Psoas muscle (tissue), 8 donors: ENCODE measurements at regions of chr3 and their contacts with region 1.

Region 1: DNA sequence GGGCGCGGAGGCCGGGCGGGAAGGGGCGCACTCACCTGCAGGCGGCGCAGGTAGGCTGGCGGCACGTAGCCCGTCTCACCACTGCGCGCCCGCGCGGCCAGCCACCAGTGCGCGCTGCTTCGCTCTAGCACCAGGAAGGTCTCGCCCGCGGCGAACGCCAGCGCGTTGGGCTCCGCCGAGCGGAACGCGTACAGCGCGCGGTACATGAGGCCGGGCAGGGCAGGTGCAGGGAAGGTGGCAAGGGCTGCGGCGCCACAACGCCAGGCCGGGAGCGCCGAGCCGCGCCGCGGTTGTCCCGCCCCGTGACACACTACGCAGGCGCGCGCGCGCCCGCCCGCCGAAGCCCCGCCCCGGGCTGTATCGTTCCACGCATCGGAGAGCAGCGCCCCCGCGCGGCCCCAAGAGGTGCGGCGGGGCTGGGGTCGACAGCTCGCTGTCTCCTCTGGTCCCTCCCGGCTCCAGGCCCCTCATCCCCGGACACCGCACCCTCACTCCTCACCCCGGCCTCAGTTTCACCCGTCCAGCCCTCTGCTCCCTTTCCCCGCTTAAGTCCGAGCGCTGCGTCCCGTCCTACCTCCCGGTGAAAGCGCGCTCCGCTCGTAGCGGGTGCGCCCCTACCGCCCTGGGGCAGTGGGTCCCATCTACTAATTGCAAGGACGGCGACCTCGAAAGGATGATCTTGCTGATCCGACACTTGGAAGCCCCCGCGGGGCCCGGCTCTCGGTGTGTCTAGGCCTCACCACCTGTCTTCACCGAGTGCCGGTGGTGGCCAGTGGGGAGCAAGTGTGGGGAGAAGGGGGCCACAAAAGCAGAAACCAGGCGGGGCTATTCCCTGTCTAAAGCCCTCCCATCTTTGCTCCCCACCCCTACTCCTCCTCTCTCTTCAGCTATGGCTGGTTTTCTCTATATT is at the start of gene NCKIPSD:
- DNase-seq: peak; percentile 91 to 95
- ATAC-seq: peak; percentile 95 to 97 (median 97)
- H3K4me3 ChIP-seq: peak within 1 kb of the TSS; percentile 96
- H3K27ac ChIP-seq: peak within 1 kb of the TSS; percentile 86
- H3K4me1 ChIP-seq: peaks cover 26% of the 10 kb centered on the region
- H3K27me3 ChIP-seq: no peaks in the 10 kb centered on the region
- CTCF ChIP-seq: peak; percentile 84
- total RNA-seq, gene NCKIPSD: 5.9 to 8.6 (median 7.5) TPM

Region 2: DNA sequence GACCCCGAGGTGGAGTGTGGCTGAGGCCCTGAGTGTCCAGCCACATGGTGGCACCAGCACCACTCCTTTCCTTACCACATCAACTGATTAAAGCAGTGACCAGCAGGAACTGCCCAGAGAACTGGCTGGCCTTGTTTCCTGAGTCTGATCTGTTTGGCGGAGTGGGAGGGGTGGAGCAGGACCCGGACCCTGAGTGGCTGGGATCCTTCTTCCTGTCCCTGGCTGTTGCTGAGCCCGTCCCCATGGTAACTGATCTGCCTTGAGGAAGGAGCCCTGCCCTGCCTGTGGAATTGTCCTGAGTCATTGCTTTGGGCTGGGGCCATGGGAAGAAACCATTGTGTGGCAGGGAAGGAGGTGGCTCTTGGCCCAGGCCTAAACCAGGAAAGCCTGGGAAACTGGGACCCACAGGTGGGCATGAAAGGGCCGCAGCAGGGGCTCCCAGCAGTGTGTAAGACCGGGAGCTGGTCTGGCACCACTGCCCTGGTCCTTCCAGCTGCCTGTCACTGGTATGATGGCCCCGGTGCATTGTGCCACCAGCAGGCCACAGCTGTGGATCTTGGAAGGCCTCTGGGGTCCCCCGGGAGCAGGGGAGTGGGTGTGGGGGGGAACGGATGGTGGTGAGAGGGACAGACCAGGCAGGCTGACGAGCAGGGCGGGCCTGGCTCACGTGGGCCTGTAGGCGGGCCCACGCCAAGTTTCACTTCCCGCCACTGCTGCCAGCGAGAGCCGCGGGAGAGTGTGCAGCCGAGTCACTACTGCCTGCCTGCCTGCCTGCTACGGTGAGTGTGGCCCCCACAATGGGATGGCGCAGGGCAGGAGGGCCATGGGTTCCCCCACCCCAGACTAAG is 220.1 kb before region 1 on chr3:
- intact Hi-C with region 1: loop called in 1 of 2 experiments (anchors 10 kb)
- DNase-seq: peak; percentile 97 to 98
- ATAC-seq: peak; percentile 92 to 93 (median 93)
- H3K4me3 ChIP-seq: peak overlapping the region; percentile 77
- H3K27ac ChIP-seq: peak overlapping the region; percentile 99
- H3K4me1 ChIP-seq: peaks cover 34% of the 10 kb centered on the region
- H3K27me3 ChIP-seq: no peaks in the 10 kb centered on the region
- CTCF ChIP-seq: peak; percentile 79

Region 3: DNA sequence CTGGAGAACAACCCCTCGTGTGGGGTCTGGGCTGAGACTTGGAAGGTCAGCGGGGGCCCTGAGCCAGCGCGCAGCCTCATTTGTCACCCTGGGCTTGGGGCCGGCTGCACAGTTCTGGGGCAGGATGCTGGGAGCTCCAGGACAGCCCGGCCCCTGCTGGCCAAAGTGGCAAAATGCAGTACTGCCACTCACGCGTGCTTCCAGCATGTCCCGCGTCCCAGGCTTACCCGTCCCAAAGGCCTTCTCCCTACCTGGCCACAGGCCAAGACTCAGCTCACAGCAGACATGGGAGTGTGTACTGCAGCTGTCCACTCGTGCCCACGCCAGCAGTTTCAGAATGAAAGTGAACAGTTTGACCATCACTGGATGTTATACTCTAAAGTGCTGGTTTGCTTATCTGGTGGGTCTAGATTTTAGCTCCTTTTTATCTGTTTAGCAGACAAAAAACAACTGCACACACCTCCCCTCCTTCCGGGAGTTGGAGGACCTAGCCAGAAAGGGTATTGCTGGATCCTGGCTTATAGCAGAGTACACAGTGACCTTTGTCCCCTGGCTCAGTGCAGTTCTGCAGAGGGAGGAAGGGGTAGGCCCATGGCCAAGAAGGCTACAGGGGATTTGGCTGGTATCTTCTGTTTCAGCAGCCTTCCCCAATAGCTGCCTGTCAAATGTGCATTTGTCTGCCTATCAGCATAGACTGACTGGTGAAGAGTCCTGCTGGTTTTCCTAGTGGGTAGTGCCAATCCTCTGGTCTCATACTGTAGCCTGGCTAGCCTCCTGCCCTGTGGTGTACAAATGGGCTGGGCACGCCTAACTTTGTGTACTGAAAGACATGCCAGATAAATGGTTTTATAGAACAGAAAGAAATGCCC is 54.3 kb after region 1 on chr3:
- intact Hi-C with region 1: loop called in 1 of 2 experiments (anchors 5 kb)
- DNase-seq: peak; percentile 89 to 96
- ATAC-seq: peak; percentile 87 to 93 (median 90)
- H3K4me3 ChIP-seq: peak overlapping the region; percentile 19
- H3K27ac ChIP-seq: peak overlapping the region; percentile 78
- H3K4me1 ChIP-seq: peaks cover 19% of the 10 kb centered on the region
- H3K27me3 ChIP-seq: no peaks in the 10 kb centered on the region
- CTCF ChIP-seq: peak; percentile 84

Region 4: DNA sequence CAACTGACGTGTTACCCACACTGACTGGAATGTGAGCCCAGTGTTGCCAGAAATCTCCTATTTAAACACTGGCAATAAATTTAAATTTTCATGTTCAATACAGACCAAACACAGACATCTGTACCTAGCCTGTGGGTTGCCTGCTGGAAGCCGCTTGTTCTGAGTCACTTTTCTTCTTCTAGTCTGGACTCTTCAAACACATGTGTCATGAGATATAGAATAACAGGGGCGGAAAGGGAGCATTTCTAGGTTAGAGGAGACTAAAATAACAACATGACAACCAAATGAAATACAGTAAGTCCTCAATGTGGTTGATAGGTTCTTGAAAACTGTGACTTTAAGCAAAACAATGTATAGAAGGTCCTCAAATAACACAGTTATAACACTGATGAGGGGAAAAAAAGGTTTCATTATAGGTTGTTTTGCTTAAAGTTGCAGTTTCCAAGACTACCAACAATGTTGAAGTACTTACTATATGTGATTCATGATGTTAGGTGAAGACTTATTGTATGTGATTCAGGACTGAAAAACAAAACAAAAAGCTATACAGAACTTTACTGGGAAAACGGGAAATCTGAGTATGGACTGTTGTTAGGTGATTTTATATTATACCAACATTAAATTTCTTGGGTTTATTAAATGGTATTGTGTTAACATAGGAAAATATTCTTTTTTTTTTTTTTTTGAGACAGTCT is 98.7 kb after region 1 on chr3:
- intact Hi-C with region 1: no loop called
- DNase-seq: no peak
- ATAC-seq: peak; percentile 89 to 96 (median 94)
- H3K4me3 ChIP-seq: peak overlapping the region; percentile 14
- H3K27ac ChIP-seq: peak overlapping the region; percentile 77
- H3K4me1 ChIP-seq: peaks cover 20% of the 10 kb centered on the region
- H3K27me3 ChIP-seq: no peaks in the 10 kb centered on the region
- CTCF ChIP-seq: no peak